ENCODE measurements at regions of chrX and their contacts with region 1.

Region 1: GRCh38 chrX:148049441-148049840 is 68.3 kb downstream of the FMR1NB start:
- DNase-seq: peak; percentile 56
- ATAC-seq: no peak
- H3K4me3 ChIP-seq: no peak overlapping the region
- H3K27ac ChIP-seq: no peak overlapping the region
- H3K4me1 ChIP-seq: no peaks in the 10 kb centered on the region
- H3K27me3 ChIP-seq: no peaks in the 10 kb centered on the region
- CTCF ChIP-seq: peak; percentile 65

Region 2: GRCh38 chrX:149470955-149471354 is 1421.5 kb after region 1 on chrX:
- CTCF ChIA-PET with region 1: no interaction called
- POLR2A ChIA-PET with region 1: no interaction called
- intact Hi-C with region 1: loop called (anchors 2 kb)
- DNase-seq: peak; percentile 85
- ATAC-seq: peak; percentile 98
- H3K4me3 ChIP-seq: no peak overlapping the region
- H3K27ac ChIP-seq: no peak overlapping the region
- H3K4me1 ChIP-seq: no peaks in the 10 kb centered on the region
- H3K27me3 ChIP-seq: no peaks in the 10 kb centered on the region
- CTCF ChIP-seq: peak; percentile 86

Measured in PC-3 (cell line).